Heart right ventricle (tissue), 16 donors: ENCODE measurements at regions of chr2 and their contacts with region 1.

Region 1: GRCh38 chr2:48048476-48049171 is 142.3 kb upstream of the FBXO11 start:
- DNase-seq: no peak
- ATAC-seq: no peak
- H3K4me3 ChIP-seq: no peak overlapping the region
- H3K27ac ChIP-seq: no peak overlapping the region
- H3K4me1 ChIP-seq: peaks cover 0 to 3% (median 0%) of the 10 kb centered on the region in 9 donors
- H3K27me3 ChIP-seq: peaks cover 0 to 5% (median 0%) of the 10 kb centered on the region in 7 donors
- CTCF ChIP-seq: no peak

Region 2: DNA sequence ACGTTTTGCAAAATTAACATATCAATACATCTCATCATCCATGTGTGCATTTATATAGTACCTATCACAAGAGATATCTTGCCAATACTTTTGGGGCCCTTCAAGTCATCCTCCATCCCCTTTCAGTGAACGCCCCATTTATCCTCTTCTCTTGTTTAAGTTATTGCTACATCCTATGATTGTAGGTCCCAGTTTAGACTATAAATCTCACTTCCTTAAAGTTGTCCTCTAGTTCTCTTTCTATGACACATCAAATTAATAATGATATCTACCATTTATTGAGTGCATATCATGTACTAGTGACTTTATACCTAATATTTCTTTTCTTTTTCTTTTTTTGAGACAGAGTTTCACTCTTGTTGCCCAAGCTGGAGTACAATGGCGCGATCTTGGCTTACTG is 113.6 kb before region 1 on chr2:
- intact Hi-C with region 1: no loop called
- DNase-seq: no peak
- ATAC-seq: no peak
- H3K4me3 ChIP-seq: no peak overlapping the region
- H3K27ac ChIP-seq: no peak overlapping the region
- H3K4me1 ChIP-seq: no peaks in the 10 kb centered on the region
- H3K27me3 ChIP-seq: no peaks in the 10 kb centered on the region
- CTCF ChIP-seq: no peak

Region 3: DNA sequence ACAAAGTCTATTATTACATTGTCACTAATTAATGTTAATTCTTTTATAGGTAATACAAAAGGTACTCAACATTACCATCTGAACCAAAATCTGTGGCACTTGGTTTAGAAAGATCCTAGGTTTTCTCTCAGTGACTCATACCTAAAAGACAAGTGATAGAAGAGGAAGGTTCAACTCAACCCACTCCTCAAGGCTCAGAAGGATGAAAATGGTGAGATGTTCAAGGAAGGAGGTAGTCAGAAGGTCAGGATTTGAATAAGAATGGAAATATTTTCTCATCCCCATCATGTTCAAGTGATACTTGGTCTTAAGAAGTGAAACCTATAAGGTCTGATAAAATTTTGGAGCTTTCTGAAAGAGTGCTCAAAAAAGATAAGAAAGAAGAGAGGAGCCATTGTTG is 56.0 kb before region 1 on chr2:
- intact Hi-C with region 1: no loop called
- DNase-seq: no peak
- ATAC-seq: no peak
- H3K4me3 ChIP-seq: no peak overlapping the region
- H3K27ac ChIP-seq: no peak overlapping the region
- H3K4me1 ChIP-seq: no peaks in the 10 kb centered on the region
- H3K27me3 ChIP-seq: peaks cover 0 to 14% (median 0%) of the 10 kb centered on the region in 7 donors
- CTCF ChIP-seq: no peak

Region 4: GRCh38 chr2:48017041-48018039 is 31.3 kb before region 1 on chr2:
- intact Hi-C with region 1: loop called in 1 of 10 experiments (anchors 2 kb)
- DNase-seq: no peak
- ATAC-seq: no peak
- H3K4me3 ChIP-seq: no peak overlapping the region
- H3K27ac ChIP-seq: no peak overlapping the region
- H3K4me1 ChIP-seq: no peaks in the 10 kb centered on the region
- H3K27me3 ChIP-seq: peaks cover 0 to 14% (median 3%) of the 10 kb centered on the region in 7 donors
- CTCF ChIP-seq: no peak

Region 5: GRCh38 chr2:48072583-48072982 is 24.0 kb after region 1 on chr2:
- intact Hi-C with region 1: loop called in 1 of 10 experiments (anchors 2 kb)
- DNase-seq: no peak
- ATAC-seq: no peak
- H3K4me3 ChIP-seq: no peak overlapping the region
- H3K27ac ChIP-seq: no peak overlapping the region
- H3K4me1 ChIP-seq: no peaks in the 10 kb centered on the region
- H3K27me3 ChIP-seq: peaks cover 0 to 3% (median 0%) of the 10 kb centered on the region in 7 donors
- CTCF ChIP-seq: no peak